Dendritic cell treated with granulocyte-macrophage colony-stimulating factor and Interleukin-4, amounts not matched to agents 40 ng/mL and 50 ng/mL, for 4 days (primary cell): ENCODE measurements at regions of chr1 and their contacts with region 1.

Region 1: GRCh38 chr1:160046494-160047110 is 14.8 kb upstream of the PIGM start:
- H3K4me3 Mint-ChIP-seq: peak overlapping the region; percentile 36
- H3K27ac Mint-ChIP-seq: no peak overlapping the region
- H3K4me1 Mint-ChIP-seq: peaks cover 13% of the 10 kb centered on the region
- H3K27me3 Mint-ChIP-seq: peaks cover 37% of the 10 kb centered on the region

Region 2: DNA sequence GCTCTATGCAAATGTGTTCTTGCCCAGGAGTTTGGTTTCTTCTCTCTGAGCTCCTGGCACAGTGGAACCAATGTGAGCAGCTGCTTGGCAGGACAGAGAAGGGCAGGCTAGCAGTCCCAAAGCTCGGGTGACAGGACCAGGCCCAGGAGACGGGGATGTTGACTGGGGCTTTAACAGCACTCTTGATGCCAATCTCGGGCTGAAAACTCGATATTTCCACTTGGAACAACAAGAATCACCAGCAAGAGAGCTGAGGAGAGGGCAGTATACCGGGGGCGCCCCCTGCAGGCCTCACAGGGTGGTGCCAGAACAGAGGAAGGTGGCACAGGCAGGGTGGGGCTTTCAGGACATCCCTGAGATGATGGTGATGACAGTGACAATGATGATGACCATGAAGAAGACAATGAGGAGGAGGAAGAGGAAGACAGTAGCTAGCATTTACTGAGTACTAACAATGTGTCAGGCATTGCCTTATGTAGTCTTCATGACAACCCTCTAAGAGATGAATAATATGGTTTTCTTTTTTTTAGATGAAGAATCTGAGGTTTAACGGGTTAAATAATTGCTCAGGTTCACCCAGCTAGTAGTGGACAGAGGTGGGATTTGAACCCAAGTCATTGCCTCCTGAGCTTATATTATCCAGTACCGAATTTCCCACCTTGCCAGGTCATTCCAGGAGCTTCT is 32.1 kb after region 1 on chr1:
- intact Hi-C with region 1: loop called (anchors 2 kb)
- H3K4me3 Mint-ChIP-seq: no peak overlapping the region
- H3K27ac Mint-ChIP-seq: no peak overlapping the region
- H3K4me1 Mint-ChIP-seq: peaks cover 57% of the 10 kb centered on the region
- H3K27me3 Mint-ChIP-seq: peaks cover 41% of the 10 kb centered on the region